GM12878 (cell line): ENCODE measurements at regions of chr10 and their contacts with region 1.

Region 1: GRCh38 chr10:13758312-13758711 is 171.5 kb downstream of the PRPF18 start:
- DNase-seq: no peak
- ATAC-seq: peak; percentile 58
- H3K4me3 ChIP-seq: no peak overlapping the region
- H3K27ac ChIP-seq: peak overlapping the region; percentile 100
- H3K4me1 ChIP-seq: peaks cover 80% of the 10 kb centered on the region
- H3K27me3 ChIP-seq: no peaks in the 10 kb centered on the region
- CTCF ChIP-seq: no peak
- EP300 ChIP-seq: no peak
- POLR2A ChIP-seq: no peak
- RAD21 ChIP-seq: no peak

Region 2: DNA sequence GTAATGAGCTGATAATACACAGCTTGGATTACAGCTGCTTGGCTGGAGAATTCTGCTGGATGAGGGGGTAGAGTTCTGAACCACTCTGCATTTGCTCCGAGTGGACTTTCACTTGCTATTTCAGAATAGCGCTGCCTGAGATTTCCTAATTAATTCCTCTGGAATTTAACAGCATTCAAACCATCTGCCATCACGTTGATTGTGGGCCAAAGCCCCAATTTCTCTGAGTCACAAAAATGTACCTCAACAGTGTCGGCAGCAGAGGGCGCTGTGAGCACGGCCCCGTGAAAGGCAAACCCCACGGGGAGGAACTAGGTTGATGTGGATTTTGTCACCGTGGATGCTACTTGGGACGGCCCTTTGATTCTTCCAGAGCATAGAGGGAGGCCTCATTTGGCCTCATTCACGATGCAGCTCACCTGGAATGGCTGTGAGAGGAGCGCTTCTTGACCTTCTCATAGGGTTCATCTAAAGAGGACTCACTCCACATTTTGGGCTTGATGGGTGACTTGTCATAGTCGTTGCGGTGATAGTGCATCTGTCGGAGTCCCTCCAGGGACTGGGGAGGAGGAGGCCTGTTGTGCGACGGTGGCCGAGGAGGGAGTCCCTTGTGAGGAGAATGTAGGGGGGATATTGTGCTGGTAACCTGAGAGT is 98.3 kb before region 1 on chr10:
- CTCF ChIA-PET with region 1: interaction called, 4 read pairs
- POLR2A ChIA-PET with region 1: interaction called, 4 read pairs
- RAD21 ChIA-PET with region 1: no interaction called
- SMC1A ChIA-PET with region 1: no interaction called
- in situ Hi-C with region 1: no loop called
- intact Hi-C with region 1: loop called (anchors 5 kb)
- DNase-seq: peak; percentile 17
- ATAC-seq: peak; percentile 80
- H3K4me3 ChIP-seq: no peak overlapping the region
- H3K27ac ChIP-seq: peak overlapping the region; percentile 37; the same call in 1 of the 2 replicates
- H3K4me1 ChIP-seq: peaks cover 8% of the 10 kb centered on the region
- H3K27me3 ChIP-seq: no peaks in the 10 kb centered on the region
- CTCF ChIP-seq: peak; percentile 91 to 93 (median 92)
- EP300 ChIP-seq: no peak
- POLR2A ChIP-seq: no peak
- RAD21 ChIP-seq: peak; percentile 99

Region 3: DNA sequence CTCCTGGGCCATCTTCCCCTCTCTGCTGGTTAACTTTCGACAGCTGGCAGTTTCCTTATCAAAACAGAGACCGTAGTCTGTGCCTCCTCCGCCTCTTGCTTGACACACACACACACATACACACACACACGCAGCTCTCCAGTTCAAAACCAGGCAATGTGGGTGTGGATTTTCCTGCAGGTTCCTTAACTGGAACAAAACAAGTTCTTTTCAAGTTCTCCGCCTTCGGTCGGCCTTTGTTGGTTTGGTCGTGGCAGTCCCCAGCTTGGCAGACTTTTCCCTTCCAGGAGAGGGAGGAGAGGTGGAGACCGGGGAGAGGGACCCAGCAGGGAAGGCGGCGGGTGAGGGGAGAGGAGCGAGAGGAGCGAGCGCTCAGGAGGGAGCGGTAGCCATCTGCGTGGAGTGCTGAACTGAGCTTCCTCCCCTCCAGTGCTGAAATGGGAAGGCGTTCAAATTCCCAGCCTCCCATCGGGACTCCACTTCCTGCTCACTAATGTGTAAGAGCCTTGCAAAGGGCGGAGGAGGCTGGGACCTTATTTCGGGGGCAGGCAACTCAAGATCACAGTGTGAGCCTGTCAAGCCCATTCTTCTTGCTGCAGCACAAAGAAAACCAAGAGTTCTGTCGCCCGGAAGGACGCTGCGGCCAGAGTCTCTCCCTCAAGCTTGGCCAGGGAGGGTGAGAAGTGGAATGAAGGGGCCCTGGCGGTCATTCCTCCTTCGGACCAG is 51.0 kb before region 1 on chr10:
- CTCF ChIA-PET with region 1: interaction called, 5 read pairs
- POLR2A ChIA-PET with region 1: interaction called, 31 read pairs
- RAD21 ChIA-PET with region 1: interaction called, 146 read pairs
- SMC1A ChIA-PET with region 1: interaction called, 81 read pairs
- in situ Hi-C with region 1: no loop called
- intact Hi-C with region 1: loop called (anchors 5 kb)
- DNase-seq: no peak
- ATAC-seq: peak; percentile 77
- H3K4me3 ChIP-seq: peak overlapping the region; percentile 86
- H3K27ac ChIP-seq: peak overlapping the region; percentile 92
- H3K4me1 ChIP-seq: peaks cover 25% of the 10 kb centered on the region
- H3K27me3 ChIP-seq: no peaks in the 10 kb centered on the region
- CTCF ChIP-seq: no peak
- EP300 ChIP-seq: no peak
- POLR2A ChIP-seq: peak; percentile 65
- RAD21 ChIP-seq: no peak; the same call in 1 of the 2 replicates

Region 4: GRCh38 chr10:13712837-13713581 is 45.3 kb before region 1 on chr10:
- CTCF ChIA-PET with region 1: interaction called, 5 read pairs
- POLR2A ChIA-PET with region 1: interaction called, 31 read pairs
- RAD21 ChIA-PET with region 1: interaction called, 146 read pairs
- SMC1A ChIA-PET with region 1: interaction called, 81 read pairs
- in situ Hi-C with region 1: no loop called
- intact Hi-C with region 1: loop called (anchors 5 kb)
- DNase-seq: peak; percentile 82
- ATAC-seq: peak; percentile 91
- H3K4me3 ChIP-seq: peak overlapping the region; percentile 17; the same call in 1 of the 2 replicates
- H3K27ac ChIP-seq: peak overlapping the region; percentile 97
- H3K4me1 ChIP-seq: peaks cover 41% of the 10 kb centered on the region
- H3K27me3 ChIP-seq: no peaks in the 10 kb centered on the region
- CTCF ChIP-seq: no peak
- EP300 ChIP-seq: peak; percentile 18 to 43; a peak in 2 of 4 replicates
- POLR2A ChIP-seq: peak; percentile 59; the same call in 1 of the 2 replicates
- RAD21 ChIP-seq: no peak

Region 5: DNA sequence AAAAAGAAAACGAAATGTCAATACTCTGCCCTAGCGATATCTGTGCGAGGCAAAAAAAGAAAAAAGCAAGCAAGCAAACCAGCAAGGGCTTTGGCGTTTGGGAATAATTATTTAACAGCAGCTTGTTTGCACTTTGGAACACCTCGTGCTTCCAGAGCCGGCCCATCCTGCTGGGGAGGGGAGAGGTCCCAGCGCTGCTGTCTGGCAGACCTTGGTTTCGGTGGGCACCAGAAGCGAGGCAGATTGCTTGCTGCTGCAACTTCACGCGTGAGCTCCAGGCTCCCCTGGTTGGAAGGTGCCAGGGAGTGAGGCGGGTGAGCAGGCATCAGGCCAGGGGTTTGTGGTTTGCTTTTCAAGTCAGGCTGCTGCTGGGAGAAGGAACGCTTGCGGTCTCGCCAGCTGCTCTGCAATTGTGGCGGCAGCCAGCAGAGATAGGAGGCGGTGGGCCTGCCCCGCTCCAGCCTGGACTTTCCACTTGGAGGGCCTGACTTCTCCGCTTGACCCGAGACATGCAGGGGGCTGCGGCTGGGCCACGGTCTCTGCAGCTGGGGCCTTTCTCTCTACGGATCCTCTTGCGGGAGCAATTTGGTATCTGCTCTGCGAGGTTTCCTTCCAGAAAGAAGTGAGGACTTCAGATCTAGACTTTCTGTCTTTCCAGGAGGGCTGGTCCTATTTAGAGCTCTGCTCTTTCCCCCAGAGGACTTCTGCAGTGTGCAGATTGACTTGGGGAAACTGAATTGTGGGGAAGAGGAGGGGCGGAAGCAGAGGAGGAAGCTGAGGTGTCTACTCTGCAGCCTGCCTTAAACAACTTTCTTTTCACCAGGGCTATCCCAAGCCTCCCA is 40.2 kb before region 1 on chr10:
- CTCF ChIA-PET with region 1: interaction called, 5 read pairs
- POLR2A ChIA-PET with region 1: interaction called, 14 read pairs
- RAD21 ChIA-PET with region 1: interaction called, 20 read pairs
- SMC1A ChIA-PET with region 1: interaction called, 19 read pairs
- in situ Hi-C with region 1: no loop called
- intact Hi-C with region 1: loop called (anchors 5 kb)
- DNase-seq: no peak
- ATAC-seq: peak; percentile 52
- H3K4me3 ChIP-seq: peak overlapping the region; percentile 23
- H3K27ac ChIP-seq: peak overlapping the region; percentile 87
- H3K4me1 ChIP-seq: peaks cover 29% of the 10 kb centered on the region
- H3K27me3 ChIP-seq: no peaks in the 10 kb centered on the region
- CTCF ChIP-seq: no peak
- EP300 ChIP-seq: no peak
- POLR2A ChIP-seq: 0 out of 2 replicates have a peak, but pooled peaks have one; percentile 23
- RAD21 ChIP-seq: no peak

Region 6: GRCh38 chr10:13769955-13770354 is 11.6 kb after region 1 on chr10:
- CTCF ChIA-PET with region 1: interaction called, 30 read pairs
- POLR2A ChIA-PET with region 1: interaction called, 104 read pairs
- RAD21 ChIA-PET with region 1: interaction called, 100 read pairs
- SMC1A ChIA-PET with region 1: interaction called, 189 read pairs
- in situ Hi-C with region 1: no loop called
- intact Hi-C with region 1: no loop called
- DNase-seq: no peak
- ATAC-seq: peak; percentile 78
- H3K4me3 ChIP-seq: no peak overlapping the region
- H3K27ac ChIP-seq: no peak overlapping the region
- H3K4me1 ChIP-seq: peaks cover 11% of the 10 kb centered on the region
- H3K27me3 ChIP-seq: no peaks in the 10 kb centered on the region
- CTCF ChIP-seq: no peak
- EP300 ChIP-seq: peak; percentile 14 to 25; a peak in 2 of 4 replicates
- POLR2A ChIP-seq: no peak
- RAD21 ChIP-seq: no peak